ENCODE measurements at regions of chr5 and their contacts with region 1.

Region 1: DNA sequence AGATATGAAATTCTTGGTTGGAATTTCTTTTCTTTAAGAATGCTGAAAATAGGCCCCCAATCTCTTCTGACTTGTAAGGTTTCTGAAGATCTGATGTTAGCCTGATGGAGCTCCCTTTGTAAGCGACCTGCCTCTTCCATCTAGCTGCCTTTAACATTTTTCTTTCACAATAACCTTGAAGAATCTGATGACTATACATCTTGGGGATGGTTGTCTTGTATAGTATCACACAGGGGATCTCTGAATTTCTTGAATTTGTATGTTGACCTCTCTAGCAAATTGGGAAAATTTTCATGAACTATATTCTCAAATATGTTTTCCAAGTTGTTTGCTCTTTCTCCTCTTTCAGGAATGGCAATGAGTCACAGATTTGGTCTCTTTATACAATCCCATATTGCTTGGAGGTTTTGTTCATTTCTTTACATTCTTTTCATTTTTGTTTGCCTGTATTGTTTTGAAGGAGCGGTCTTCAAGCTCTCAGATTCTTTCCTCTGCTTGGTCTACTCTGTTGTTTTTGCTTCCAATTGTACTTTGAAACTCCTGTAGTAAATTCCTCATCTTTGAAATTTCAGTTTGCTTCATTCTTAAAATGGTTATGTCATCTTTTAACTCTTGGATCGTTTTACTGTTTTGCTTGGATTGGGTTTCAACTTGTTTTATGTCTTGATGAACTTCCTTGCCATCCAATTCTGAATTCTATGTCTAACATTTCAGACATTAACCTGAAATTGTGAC is 245.2 kb upstream of the TARS1 start:
- DNase-seq: peak; percentile 70
- ATAC-seq: peak; percentile 85
- H3K4me3 ChIP-seq: peak overlapping the region; percentile 23
- H3K27ac ChIP-seq: peak overlapping the region; percentile 21
- H3K4me1 ChIP-seq: peaks cover 23% of the 10 kb centered on the region
- H3K27me3 ChIP-seq: no peaks in the 10 kb centered on the region
- CTCF ChIP-seq: no peak

Region 2: DNA sequence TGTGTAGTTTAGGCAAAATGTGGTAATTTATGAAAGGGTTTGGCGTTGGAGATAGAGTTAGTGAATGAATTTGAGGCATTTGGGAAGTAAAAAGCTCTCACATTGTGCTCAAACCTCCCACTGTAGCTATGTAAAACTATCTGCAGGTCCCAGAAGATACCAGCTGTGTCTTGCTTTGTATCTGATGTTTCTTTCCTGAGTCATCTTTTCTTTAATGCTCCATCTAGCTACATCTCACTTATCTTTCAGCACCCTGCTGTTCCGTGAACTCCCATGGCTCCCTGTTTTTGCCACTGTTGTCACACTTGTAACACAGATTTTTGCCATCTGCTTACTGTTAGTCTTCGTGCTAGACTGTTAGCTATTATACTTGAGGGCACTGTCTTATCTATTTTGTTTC is 231.3 kb before region 1 on chr5:
- CTCF ChIA-PET with region 1: no interaction called
- POLR2A ChIA-PET with region 1: no interaction called
- intact Hi-C with region 1: no loop called
- DNase-seq: no peak
- ATAC-seq: no peak
- H3K4me3 ChIP-seq: no peak overlapping the region
- H3K27ac ChIP-seq: no peak overlapping the region
- H3K4me1 ChIP-seq: peaks cover 9% of the 10 kb centered on the region
- H3K27me3 ChIP-seq: no peaks in the 10 kb centered on the region
- CTCF ChIP-seq: no peak

Region 3: DNA sequence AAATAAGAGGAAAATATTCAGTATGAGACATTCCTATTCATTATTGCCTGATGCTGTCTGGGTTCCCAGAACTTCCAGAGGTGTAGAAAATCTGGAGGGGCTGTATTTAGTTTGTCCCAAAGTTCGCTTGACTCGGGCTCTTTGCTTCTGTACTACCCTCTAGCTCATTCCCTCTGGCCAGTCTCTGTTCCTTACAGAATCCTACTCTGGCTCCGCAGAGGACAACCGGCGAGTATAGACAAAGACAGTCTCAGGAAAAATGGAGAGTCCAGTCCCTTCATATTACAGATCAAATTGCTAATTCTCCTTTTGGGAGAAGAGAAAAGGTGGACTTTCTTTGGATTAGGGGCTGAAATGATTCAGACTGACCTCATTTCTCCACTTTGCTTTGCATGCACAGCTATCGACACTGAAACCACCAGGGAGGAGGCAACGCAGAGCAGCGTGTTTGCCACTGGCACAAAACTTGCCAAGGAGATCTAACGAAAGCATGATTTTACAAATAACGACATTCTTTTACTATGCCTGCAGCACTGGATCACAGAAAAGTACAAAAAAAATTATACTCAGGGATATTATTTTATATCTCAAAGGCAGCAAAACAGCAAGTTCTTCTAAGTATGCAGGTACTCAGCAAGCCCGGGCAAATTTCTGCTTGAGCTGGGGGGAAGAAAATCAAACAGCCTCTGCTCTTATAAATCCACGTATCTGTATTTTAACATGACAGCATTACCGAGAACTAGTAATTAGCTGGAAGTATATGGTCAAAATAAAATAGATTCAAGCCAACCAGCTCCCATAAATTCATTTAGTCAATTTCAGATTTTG is 204.8 kb before region 1 on chr5:
- CTCF ChIA-PET with region 1: no interaction called
- POLR2A ChIA-PET with region 1: no interaction called
- intact Hi-C with region 1: no loop called
- DNase-seq: no peak
- ATAC-seq: no peak
- H3K4me3 ChIP-seq: no peak overlapping the region
- H3K27ac ChIP-seq: no peak overlapping the region
- H3K4me1 ChIP-seq: peaks cover 7% of the 10 kb centered on the region; the same call in 1 of the 2 replicates
- H3K27me3 ChIP-seq: no peaks in the 10 kb centered on the region
- CTCF ChIP-seq: no peak

Region 4: DNA sequence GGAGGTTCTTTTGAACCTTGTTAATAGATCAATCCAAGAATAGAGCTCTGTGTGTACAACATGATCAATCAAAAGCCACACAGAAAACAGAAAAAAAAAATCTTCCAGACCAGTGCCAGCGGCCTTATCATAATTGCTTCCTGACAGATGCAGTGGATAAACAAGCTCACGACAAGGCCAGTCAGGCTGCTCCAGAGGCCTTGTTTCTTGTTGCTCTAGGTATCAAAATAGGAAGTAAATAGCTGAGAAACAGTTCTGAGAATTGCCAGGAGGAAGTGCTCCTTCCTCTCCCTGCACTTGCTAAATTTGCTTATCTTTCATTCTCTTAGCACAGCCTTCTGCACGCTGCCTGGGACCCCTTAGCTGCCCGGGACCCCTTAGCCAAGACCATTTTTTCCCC is 46.2 kb after region 1 on chr5:
- CTCF ChIA-PET with region 1: no interaction called
- POLR2A ChIA-PET with region 1: no interaction called
- intact Hi-C with region 1: no loop called
- DNase-seq: no peak
- ATAC-seq: no peak
- H3K4me3 ChIP-seq: no peak overlapping the region
- H3K27ac ChIP-seq: no peak overlapping the region
- H3K4me1 ChIP-seq: no peaks in the 10 kb centered on the region
- H3K27me3 ChIP-seq: no peaks in the 10 kb centered on the region
- CTCF ChIP-seq: no peak

Region 5: GRCh38 chr5:33409435-33410170 is 214.0 kb after region 1 on chr5:
- CTCF ChIA-PET with region 1: no interaction called
- POLR2A ChIA-PET with region 1: no interaction called
- intact Hi-C with region 1: loop called (anchors 5 kb)
- DNase-seq: no peak
- ATAC-seq: no peak
- H3K4me3 ChIP-seq: no peak overlapping the region
- H3K27ac ChIP-seq: no peak overlapping the region
- H3K4me1 ChIP-seq: no peaks in the 10 kb centered on the region
- H3K27me3 ChIP-seq: no peaks in the 10 kb centered on the region
- CTCF ChIP-seq: no peak